ENCODE measurements at regions of chr4 and their contacts with region 1.

Region 1: GRCh38 chr4:1809754-1810511 is 16.8 kb downstream of the FGFR3 start:
- DNase-seq: peak; percentile 74 to 94
- H3K4me3 ChIP-seq: no peak overlapping the region
- H3K27ac ChIP-seq: no peak overlapping the region
- H3K4me1 ChIP-seq: no peaks in the 10 kb centered on the region
- H3K27me3 ChIP-seq: no peaks in the 10 kb centered on the region
- CTCF ChIP-seq: peak in 5 of 7 experiments; percentile 70 to 83 (median 81)
- EP300 ChIP-seq: no peak
- POLR2A ChIP-seq: no peak

Region 2: DNA sequence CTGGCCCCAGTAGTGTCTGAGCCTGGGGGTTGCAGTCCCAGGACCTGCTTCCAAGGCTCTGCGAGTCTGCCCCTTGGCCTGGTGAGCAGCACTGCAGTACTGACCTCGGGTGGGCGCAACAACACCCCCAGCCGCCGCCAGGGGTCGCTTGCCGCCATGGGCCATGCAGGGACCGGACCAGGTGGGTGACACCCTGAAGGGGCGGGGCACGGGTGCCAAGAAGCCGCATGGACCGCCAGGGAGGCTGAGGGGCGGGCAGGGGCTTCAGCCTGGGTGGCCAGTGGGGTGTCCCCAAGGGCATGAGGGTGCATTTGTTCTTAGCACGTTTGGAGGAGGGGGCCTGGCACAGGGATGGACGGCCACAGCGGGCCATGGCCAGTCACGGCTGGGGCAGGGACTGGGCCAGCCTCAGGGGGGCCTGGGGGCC is 63.7 kb before region 1 on chr4:
- intact Hi-C with region 1: loop called (anchors 5 kb)
- DNase-seq: peak; percentile 80 to 92
- H3K4me3 ChIP-seq: no peak overlapping the region
- H3K27ac ChIP-seq: peak overlapping the region in 1 of 5 donors; percentile 53
- H3K4me1 ChIP-seq: peaks cover 16 to 26% (median 21%) of the 10 kb centered on the region in 4 donors
- H3K27me3 ChIP-seq: peaks cover 0 to 30% (median 4%) of the 10 kb centered on the region in 3 donors
- CTCF ChIP-seq: peak in 5 of 7 experiments; percentile 68 to 84 (median 80)
- EP300 ChIP-seq: no peak
- POLR2A ChIP-seq: no peak

Region 3: DNA sequence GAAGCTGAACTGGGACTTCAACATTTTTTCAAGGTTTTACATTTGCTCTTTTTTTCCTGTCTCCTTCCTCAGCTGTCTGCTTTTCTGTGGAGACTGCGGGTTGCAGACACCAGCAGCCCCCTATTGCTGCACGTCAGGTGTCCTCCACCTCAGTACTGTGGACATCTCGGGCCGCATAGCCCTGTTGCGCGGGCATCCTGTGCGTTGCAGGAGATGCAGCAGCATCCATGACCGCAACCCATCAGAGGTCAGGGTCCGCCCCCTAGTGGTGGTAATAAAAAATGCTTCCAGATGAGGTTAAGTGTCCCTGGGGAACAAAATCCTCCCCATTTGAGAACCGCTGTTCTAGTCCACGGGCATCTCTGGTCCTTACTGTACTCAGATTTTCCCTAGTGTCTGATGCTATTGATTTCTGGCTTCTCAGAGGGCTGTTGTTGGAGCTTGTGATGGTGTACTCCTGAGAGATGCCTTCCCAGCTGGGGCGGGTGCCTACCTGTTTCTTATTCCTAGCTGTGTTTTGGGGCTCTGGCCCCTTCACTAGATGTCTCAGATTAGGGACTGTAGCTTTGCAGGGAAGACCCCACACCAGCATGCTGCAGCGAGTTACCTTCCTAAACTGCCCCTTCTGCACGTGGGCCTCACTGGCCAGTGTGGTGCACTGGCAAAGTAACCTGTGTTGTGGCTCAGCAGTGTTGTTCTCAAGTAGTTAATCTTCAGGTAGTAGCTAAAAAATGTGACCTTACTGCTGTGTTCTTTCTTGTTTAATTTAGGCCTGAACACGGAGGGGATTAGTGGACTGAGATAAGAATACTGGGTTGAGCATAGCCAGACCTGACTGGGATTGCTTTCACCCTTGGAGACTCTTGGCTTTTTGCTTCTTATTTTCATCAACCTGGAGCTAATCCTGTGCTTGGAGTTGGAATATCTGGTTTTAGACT is 89.5 kb after region 1 on chr4:
- intact Hi-C with region 1: loop called (anchors 10 kb)
- DNase-seq: peak; percentile 73 to 92
- H3K4me3 ChIP-seq: no peak overlapping the region
- H3K27ac ChIP-seq: no peak overlapping the region
- H3K4me1 ChIP-seq: peaks cover 0 to 11% (median 3%) of the 10 kb centered on the region in 4 donors
- H3K27me3 ChIP-seq: no peaks in the 10 kb centered on the region
- CTCF ChIP-seq: peak in 5 of 7 experiments; percentile 71 to 92 (median 84)
- EP300 ChIP-seq: no peak
- POLR2A ChIP-seq: no peak

Measured in stomach (tissue), 19 donors.